ENCODE measurements at regions of chr2 and their contacts with region 1.

Region 1: GRCh38 chr2:23824777-23825212 is 102.1 kb downstream of the ATAD2B start:
- DNase-seq: peak; percentile 34
- ATAC-seq: peak; percentile 75
- H3K4me3 ChIP-seq: no peak overlapping the region
- H3K27ac ChIP-seq: no peak overlapping the region; the same call in 1 of the 2 replicates
- H3K4me1 ChIP-seq: peaks cover 14% of the 10 kb centered on the region
- H3K27me3 ChIP-seq: no peaks in the 10 kb centered on the region
- CTCF ChIP-seq: peak; percentile 59 to 67 (median 64)
- EP300 ChIP-seq: no peak
- POLR2A ChIP-seq: no peak
- RAD21 ChIP-seq: peak; percentile 79

Region 2: DNA sequence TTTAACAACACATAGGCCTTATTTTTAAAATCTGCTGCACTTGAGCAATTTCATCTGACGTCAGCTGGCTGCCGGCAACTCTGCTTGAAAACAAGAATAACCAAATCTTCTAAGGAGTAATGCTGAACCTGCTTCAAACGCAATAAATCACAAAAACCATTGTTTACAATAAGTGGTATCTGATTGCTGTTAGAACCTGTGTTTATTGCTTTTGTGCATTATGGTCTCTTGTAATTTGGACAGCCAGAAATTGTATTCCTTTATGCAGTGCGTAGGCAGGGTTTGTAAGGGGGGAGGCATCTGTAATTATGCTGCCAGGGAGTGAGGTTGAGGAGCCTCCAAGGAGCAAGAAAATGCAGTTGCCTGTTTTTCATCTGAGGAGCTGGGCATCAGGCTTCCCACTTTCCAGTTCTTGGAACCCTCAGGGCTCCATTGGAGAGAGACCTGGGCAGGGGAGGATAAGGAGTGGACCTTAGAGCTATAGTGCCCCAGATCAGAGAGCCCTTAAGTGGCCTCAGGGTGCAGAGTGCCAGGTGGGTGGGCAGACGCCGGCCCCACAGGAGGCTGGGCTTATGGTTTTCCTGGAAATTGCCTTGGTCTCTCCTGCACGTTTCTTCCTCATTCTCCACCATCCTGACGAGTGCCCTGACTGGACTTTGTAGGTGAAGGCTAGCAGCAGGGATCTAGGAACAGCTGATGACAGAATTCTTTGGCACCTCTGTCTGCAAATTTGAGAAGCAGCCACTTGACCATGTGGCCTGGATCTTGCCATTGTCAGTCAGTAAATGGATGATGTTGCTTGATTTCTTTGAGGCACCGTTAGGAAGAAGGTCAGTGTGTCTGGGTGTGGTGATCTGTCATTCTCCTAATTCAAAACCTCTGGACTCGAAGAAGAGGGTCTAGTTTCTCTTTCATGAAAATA is 310.7 kb before region 1 on chr2:
- CTCF ChIA-PET with region 1: no interaction called
- POLR2A ChIA-PET with region 1: no interaction called
- RAD21 ChIA-PET with region 1: no interaction called
- SMC1A ChIA-PET with region 1: no interaction called
- in situ Hi-C with region 1: no loop called
- intact Hi-C with region 1: no loop called
- DNase-seq: no peak
- ATAC-seq: no peak
- H3K4me3 ChIP-seq: no peak overlapping the region
- H3K27ac ChIP-seq: no peak overlapping the region
- H3K4me1 ChIP-seq: no peaks in the 10 kb centered on the region
- H3K27me3 ChIP-seq: no peaks in the 10 kb centered on the region
- CTCF ChIP-seq: no peak
- EP300 ChIP-seq: no peak
- POLR2A ChIP-seq: no peak
- RAD21 ChIP-seq: no peak

Region 3: GRCh38 chr2:23843051-23843976 is 18.5 kb after region 1 on chr2:
- CTCF ChIA-PET with region 1: interaction called, 10 read pairs
- POLR2A ChIA-PET with region 1: no interaction called
- RAD21 ChIA-PET with region 1: interaction called, 5 read pairs
- SMC1A ChIA-PET with region 1: interaction called, 10 read pairs
- in situ Hi-C with region 1: no loop called
- intact Hi-C with region 1: no loop called
- DNase-seq: no peak
- ATAC-seq: no peak
- H3K4me3 ChIP-seq: no peak overlapping the region
- H3K27ac ChIP-seq: no peak overlapping the region
- H3K4me1 ChIP-seq: peaks cover 2% of the 10 kb centered on the region; the same call in 1 of the 2 replicates
- H3K27me3 ChIP-seq: no peaks in the 10 kb centered on the region
- CTCF ChIP-seq: no peak
- EP300 ChIP-seq: no peak
- POLR2A ChIP-seq: no peak
- RAD21 ChIP-seq: no peak

Region 4: DNA sequence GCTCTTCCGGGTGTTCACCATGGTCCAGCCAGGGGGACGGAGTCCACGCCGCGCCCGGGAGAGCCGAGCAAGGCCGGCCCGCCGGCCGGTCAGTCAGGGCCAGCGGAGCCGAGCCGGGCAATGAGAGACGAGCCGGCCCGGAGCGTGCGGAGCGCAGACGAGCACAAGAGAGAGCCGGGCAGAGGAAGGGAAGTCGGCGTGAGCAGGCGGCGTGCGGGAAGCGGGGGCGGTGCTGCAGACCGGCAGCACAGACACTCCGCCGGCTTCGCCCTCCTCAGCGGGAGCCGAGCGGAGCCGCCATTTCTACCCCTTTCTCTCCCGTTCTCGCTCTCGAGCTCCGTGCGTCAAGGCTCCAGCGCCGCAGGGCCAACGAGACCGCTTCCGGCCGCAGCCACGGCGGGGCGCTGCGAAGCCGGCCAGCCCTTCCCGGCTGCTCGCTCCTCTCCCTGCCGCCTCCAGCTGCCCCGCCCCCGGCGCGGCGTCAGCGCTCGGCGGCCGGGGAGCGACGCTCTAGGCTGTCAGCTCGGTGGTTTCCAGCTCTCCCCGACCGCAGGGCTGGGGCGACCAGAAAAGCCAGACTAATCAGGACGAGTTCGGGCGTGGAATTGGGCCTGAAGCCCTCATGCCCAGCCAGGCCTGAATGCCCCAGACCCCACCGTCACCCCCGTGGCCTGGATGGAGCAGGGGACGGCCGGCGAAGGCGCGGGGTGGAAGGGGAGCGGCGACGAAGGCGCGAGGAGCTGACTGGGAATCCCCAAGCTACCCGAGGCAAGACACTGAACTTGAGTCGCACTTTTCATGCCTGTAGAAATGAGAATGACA is 102.2 kb after region 1 on chr2 and contains the start of gene ATAD2B:
- CTCF ChIA-PET with region 1: interaction called, 121 read pairs
- POLR2A ChIA-PET with region 1: interaction called, 6 read pairs
- RAD21 ChIA-PET with region 1: interaction called, 111 read pairs
- SMC1A ChIA-PET with region 1: interaction called, 83 read pairs
- in situ Hi-C with region 1: no loop called
- intact Hi-C with region 1: loop called (anchors 1 kb)
- DNase-seq: peak; percentile 89
- ATAC-seq: peak; percentile 83
- H3K4me3 ChIP-seq: peak within 1 kb of the TSS; percentile 89
- H3K27ac ChIP-seq: peak within 1 kb of the TSS; percentile 99
- H3K4me1 ChIP-seq: peaks cover 9% of the 10 kb centered on the region
- H3K27me3 ChIP-seq: no peaks in the 10 kb centered on the region
- CTCF ChIP-seq: peak; percentile 80 to 93 (median 93); a peak in 5 of 6 replicates
- EP300 ChIP-seq: peak; percentile 13 to 14; a peak in 1 of 4 replicates
- POLR2A ChIP-seq: peak; percentile 94
- RAD21 ChIP-seq: peak; percentile 68
- polyA plus RNA-seq, gene ATAD2B: 3.6 to 5.4 TPM

Region 5: DNA sequence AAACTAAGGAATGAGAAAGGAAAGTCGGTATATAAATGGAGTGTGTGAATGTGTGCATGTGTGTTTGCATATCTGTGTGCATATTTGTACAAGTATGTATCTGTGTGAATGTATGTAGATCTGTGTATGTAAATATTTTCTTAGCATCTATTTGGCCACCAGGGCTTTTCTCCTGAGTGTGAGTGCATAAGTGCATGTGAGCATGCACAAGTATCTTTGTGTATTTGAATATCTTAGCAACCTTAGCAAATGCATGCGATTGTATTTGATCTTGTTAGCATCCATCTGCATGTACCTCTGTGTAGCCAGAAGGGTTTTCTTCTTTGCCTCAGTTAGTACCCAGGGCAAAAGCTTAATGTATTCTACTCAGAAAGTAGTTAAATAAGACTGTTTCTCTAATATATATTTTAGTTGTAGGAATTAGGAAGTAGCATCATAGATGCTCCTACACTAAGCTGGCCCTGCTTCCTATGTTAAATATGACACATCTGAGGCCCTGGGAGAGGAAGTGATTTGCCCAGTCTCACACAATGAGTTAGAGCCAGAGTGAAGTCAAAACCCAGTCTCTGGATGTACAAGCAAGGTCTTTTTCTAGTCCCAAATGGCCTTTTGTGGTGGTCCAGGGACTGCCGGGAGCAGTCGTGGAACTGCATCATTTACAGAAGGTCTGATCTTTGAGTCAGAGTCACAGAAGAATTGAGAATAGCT is 233.9 kb after region 1 on chr2:
- CTCF ChIA-PET with region 1: interaction called, 52 read pairs
- POLR2A ChIA-PET with region 1: no interaction called
- RAD21 ChIA-PET with region 1: interaction called, 15 read pairs
- SMC1A ChIA-PET with region 1: interaction called, 13 read pairs
- in situ Hi-C with region 1: no loop called
- intact Hi-C with region 1: loop called (anchors 1 kb)
- DNase-seq: no peak
- ATAC-seq: peak; percentile 43
- H3K4me3 ChIP-seq: no peak overlapping the region
- H3K27ac ChIP-seq: no peak overlapping the region
- H3K4me1 ChIP-seq: peaks cover 4% of the 10 kb centered on the region; the same call in 1 of the 2 replicates
- H3K27me3 ChIP-seq: no peaks in the 10 kb centered on the region
- CTCF ChIP-seq: no peak
- EP300 ChIP-seq: no peak
- POLR2A ChIP-seq: no peak
- RAD21 ChIP-seq: no peak

Region 6: DNA sequence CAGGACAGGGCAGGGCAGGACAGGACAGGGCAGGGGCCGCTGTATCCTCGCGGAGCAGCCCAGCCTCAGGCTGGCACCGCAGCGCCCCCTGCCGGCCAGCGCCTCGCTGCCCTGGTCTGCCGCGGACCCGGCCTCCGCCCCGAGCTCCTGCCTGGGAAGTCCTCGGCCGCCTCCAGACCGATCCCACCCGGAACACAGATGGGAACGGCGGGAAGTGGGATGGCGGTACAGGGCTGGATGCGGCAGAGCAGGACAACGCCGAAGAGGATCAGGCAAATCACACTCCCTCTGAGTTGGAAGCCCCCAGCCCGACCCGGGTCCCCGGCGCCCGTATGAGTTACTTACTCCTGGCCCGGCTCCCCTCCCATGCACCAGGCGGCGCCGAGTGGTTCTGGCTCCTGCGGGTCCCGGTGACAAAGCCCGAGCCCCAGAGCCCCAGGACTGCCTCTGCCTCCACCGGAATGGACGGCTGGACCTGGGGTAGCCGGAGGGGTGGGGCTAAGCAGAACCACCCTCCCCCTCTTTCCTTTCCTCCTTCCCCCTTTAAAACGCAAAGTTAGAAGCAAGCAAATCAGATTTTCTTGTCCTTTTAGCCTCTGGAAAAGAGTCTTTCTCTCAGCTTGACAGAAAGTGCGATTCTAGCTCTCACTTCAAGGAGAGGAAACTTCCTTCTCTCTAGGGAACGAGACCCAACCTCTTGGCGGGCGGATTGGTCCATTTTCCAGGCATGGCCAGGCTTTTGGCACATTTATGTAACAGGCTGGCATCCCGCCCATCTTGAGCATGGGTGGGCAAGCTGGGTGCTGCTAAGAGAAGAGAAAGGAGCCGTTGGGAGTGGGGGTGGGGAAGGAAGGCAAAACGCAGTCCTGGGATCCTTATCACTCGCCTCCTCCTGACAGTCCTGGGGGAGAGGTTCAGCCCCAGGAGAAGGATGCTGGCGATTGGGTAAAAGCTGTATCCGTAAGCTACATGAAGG is 259.9 kb after region 1 on chr2 and contains the start of gene TP53I3:
- CTCF ChIA-PET with region 1: interaction called, 105 read pairs
- POLR2A ChIA-PET with region 1: interaction called, 8 read pairs
- RAD21 ChIA-PET with region 1: interaction called, 74 read pairs
- SMC1A ChIA-PET with region 1: interaction called, 44 read pairs
- in situ Hi-C with region 1: loop called (anchors 5 kb)
- intact Hi-C with region 1: loop called (anchors 1 kb)
- DNase-seq: peak; percentile 46
- ATAC-seq: peak; percentile 94
- H3K4me3 ChIP-seq: peak within 1 kb of the TSS; percentile 70
- H3K27ac ChIP-seq: peak within 1 kb of the TSS; percentile 87
- H3K4me1 ChIP-seq: peaks cover 12% of the 10 kb centered on the region
- H3K27me3 ChIP-seq: no peaks in the 10 kb centered on the region
- CTCF ChIP-seq: peak; percentile 84 to 89 (median 86)
- EP300 ChIP-seq: 0 out of 4 replicates have a peak, but pooled peaks of 1 of the 2 experiments have one; percentile 9
- POLR2A ChIP-seq: no peak
- RAD21 ChIP-seq: peak; percentile 66
- polyA plus RNA-seq, gene TP53I3: 1.4 to 2.6 TPM